ENCODE measurements at regions of chr11 and their contacts with region 1.

Region 1: DNA sequence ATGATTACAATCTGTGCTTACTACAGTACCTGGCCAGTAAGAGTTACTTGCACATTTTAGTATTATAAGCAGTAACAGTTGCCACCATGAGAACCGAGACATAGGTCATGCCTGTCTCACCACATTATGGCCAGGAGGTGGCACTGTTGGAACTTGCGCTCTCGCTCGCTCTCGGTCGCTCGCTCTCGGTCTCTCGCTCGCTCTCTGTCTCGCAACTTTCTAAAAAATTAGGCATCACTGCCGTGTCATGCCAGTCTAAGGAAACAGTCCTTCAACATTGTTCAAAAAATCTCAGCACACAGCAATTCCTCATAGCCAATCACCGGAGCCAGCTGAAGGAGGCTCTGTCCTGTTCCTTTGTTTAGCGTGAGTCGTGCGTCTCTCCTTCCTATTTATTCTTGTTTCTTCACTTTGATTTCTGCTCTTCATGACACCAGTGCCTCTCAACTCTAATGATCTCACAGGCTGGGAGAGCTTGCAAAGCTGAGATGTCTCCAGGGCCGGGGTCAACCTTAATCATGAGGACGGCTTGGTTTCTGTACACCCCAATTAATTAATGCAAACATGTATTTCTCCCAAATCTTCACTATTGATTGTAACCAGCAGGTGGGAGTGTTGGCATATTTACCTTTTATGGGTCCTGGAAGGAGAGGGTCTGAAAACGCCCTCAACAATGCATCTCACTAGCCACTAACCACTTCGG is 6.3 kb upstream of the ADAMTS8 start:
- DNase-seq: peak in 1 of 2 donors; percentile 82
- H3K4me3 ChIP-seq: peak overlapping the region; percentile 53 to 71
- H3K27ac ChIP-seq: peak overlapping the region; percentile 64 to 81
- H3K4me1 ChIP-seq: peaks cover 0 to 3% of the 10 kb centered on the region in 2 donors
- H3K27me3 ChIP-seq: no peaks in the 10 kb centered on the region
- CTCF ChIP-seq: peak; percentile 68 to 79 (median 77)

Region 2: GRCh38 chr11:130827451-130828377 is 393.0 kb after region 1 on chr11:
- intact Hi-C with region 1: loop called (anchors 1 kb)
- DNase-seq: peak in 1 of 2 donors; percentile 86
- H3K4me3 ChIP-seq: no peak overlapping the region
- H3K27ac ChIP-seq: peak overlapping the region; percentile 60 to 63
- H3K4me1 ChIP-seq: peaks cover 10 to 30% of the 10 kb centered on the region in 2 donors
- H3K27me3 ChIP-seq: no peaks in the 10 kb centered on the region
- CTCF ChIP-seq: peak; percentile 39 to 59 (median 56)

Region 3: GRCh38 chr11:130861902-130862860 is 427.5 kb after region 1 on chr11:
- intact Hi-C with region 1: loop called (anchors 1 kb)
- DNase-seq: peak; percentile 66 to 97
- H3K4me3 ChIP-seq: peak overlapping the region; percentile 34 to 45
- H3K27ac ChIP-seq: peak overlapping the region; percentile 86 to 90
- H3K4me1 ChIP-seq: peaks cover 13 to 41% of the 10 kb centered on the region in 2 donors
- H3K27me3 ChIP-seq: no peaks in the 10 kb centered on the region
- CTCF ChIP-seq: peak; percentile 99 to 100 (median 100)

Region 4: DNA sequence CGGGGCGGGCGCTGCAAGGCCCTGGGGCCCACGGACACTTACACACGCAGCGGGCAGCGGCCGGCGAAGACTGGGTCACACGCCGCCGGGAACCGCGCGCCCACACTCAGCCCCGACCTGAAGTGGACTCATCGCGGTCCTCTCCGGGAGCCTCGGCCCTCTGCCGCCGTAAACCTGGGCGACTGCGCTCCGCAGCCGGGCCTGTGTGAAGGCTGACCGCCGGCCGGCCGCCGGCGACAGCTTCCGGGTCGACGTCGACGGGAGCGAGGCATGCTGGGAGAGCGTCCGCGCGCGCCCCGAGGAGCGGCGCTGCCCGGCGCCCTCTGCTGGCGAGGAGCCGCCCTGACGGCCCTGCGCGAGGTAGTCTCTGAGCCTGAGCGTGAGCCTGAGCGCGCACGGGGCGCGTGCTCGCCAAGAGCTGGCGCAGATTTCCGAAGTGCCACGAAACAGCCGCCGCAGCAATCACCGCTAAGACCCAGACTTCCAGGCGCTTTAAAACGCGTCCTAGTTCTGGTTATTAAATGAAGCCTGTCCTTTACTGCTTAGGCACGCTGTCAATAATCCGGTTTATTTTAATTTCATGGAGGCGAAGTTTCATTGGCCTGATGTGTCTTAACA is 481.7 kb after region 1 on chr11 and contains the start of gene SNX19:
- intact Hi-C with region 1: loop called (anchors 1 kb)
- DNase-seq: peak; percentile 52 to 94
- H3K4me3 ChIP-seq: peak within 1 kb of the TSS; percentile 72 to 99
- H3K27ac ChIP-seq: peak within 1 kb of the TSS; percentile 86 to 97
- H3K4me1 ChIP-seq: peaks cover 6 to 11% of the 10 kb centered on the region in 2 donors
- H3K27me3 ChIP-seq: no peaks in the 10 kb centered on the region
- CTCF ChIP-seq: peak; percentile 88 to 96 (median 93)
- total RNA-seq, gene SNX19: 137 TPM

Region 5: DNA sequence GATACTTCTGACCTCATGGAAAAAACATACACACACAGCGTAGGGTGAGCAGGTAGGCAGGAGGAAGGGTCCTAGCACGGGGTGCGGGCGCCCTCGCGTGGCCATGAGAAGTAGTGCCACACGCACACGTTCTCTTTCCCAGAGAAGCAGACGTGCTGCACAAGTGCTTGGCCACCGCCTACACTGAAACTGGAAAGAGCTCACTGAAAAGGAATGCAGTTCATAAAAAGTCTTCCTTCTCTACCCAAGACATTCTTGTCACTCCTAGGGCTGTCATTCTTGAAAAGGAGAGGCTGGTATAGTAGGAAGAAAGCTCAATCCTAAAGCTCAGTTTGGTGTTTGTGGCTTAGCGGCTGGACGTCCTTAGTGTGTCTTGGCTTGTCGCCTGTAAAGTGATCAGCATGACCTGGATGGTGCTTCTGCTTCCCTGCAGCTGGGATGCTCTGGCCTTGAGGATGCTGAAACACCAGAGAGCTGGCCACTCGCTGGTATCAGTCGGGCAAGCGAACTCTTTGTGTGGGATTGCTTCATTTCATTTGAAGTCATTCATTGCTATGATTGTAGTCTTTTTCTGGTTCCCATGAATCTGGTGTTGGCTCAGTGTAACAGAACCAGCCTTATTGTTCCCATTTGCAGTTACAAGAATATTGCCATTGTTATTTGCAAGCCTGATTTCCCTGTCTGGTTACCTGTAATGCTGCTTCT is 1239.5 kb after region 1 on chr11:
- intact Hi-C with region 1: loop called (anchors 5 kb)
- DNase-seq: no peak
- H3K4me3 ChIP-seq: no peak overlapping the region
- H3K27ac ChIP-seq: no peak overlapping the region
- H3K4me1 ChIP-seq: no peaks in the 10 kb centered on the region
- H3K27me3 ChIP-seq: no peaks in the 10 kb centered on the region
- CTCF ChIP-seq: peak; percentile 58 to 76 (median 68)